Activated B cell treated with CpG ODN at 0.5 μM for 24 hours (primary cell): ENCODE measurements at regions of chr10 and their contacts with region 1.

Region 1: DNA sequence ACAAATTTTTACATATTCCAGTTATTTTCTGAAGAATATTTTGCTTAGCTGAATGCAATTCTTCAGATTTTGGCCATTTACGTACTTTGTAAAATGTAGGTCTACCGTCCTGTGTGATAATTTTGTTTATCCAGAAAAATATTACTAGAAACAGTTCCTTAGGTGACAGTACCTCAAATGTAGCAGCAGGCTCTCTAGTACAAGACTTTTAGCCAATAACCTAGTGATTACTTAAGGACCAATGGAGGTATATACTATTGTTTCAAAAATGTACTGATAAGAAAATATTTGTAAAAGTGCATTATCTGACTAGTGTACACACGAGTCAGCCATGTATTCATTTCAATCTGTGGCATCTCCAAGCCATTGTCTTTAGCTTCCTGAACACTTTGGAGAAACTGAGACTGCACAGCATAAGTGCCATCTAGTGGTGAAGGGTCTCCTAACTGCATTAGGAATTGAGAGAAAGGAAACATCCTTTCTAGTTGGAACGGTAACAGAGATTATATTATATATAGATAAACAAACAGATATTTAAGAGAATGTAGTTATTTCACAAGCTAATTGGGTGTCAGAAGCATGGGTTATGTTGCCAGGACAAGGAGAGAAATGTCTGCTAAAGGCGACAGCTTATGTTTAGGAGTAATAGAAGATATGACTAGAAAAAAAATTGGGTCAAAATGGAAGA is 23.7 kb downstream of the RTKN2 start:
- DNase-seq: no peak
- ATAC-seq: peak; percentile 64
- H3K4me3 Mint-ChIP-seq: peak overlapping the region; percentile 57
- H3K27ac Mint-ChIP-seq: peak overlapping the region; percentile 72
- H3K4me1 Mint-ChIP-seq: peaks cover 45% of the 10 kb centered on the region
- H3K27me3 Mint-ChIP-seq: no peaks in the 10 kb centered on the region
- CTCF ChIP-seq: peak; percentile 74

Region 2: GRCh38 chr10:61140765-61141392 is 1104.0 kb before region 1 on chr10:
- CTCF ChIA-PET with region 1: no interaction called
- POLR2A ChIA-PET with region 1: no interaction called
- intact Hi-C with region 1: loop called (anchors 1 kb)
- DNase-seq: no peak
- ATAC-seq: peak; percentile 58
- H3K4me3 Mint-ChIP-seq: no peak overlapping the region
- H3K27ac Mint-ChIP-seq: no peak overlapping the region
- H3K4me1 Mint-ChIP-seq: peaks cover 21% of the 10 kb centered on the region
- H3K27me3 Mint-ChIP-seq: peaks cover 4% of the 10 kb centered on the region
- CTCF ChIP-seq: no peak

Region 3: DNA sequence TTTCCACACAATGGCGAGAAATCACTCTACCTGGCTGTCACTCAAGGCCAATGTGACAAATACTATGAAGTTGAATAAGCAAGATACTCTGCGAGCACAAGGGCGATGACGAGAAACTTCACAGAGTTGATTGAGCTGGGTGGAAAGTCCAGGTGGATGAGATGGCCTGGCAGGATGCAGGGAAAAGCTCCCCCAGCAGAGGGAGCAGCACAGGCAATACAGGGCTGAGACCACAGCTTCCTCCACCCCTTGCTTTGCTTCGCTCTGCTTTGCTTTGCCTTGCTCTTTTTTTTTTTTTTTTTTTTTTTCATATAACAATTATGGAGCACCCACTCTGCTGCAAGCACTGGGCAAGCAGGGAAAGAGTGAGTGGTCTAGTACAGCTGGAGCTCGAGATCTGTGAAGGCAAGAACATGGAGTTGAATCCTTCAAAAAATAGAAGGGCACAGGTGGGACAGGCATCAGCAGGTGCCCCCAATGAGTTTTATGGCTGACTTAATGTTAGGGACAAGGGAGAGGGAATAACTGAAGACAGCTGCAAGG is 493.9 kb before region 1 on chr10:
- CTCF ChIA-PET with region 1: interaction called, 31 read pairs
- POLR2A ChIA-PET with region 1: interaction called, 14 read pairs
- intact Hi-C with region 1: loop called (anchors 1 kb)
- DNase-seq: peak; percentile 47
- ATAC-seq: peak; percentile 97
- H3K4me3 Mint-ChIP-seq: peak overlapping the region; percentile 44
- H3K27ac Mint-ChIP-seq: no peak overlapping the region
- H3K4me1 Mint-ChIP-seq: peaks cover 38% of the 10 kb centered on the region
- H3K27me3 Mint-ChIP-seq: no peaks in the 10 kb centered on the region
- CTCF ChIP-seq: no peak

Region 4: GRCh38 chr10:61987951-61988379 is 257.0 kb before region 1 on chr10:
- CTCF ChIA-PET with region 1: interaction called, 13 read pairs
- POLR2A ChIA-PET with region 1: interaction called, 15 read pairs
- intact Hi-C with region 1: loop called (anchors 2 kb)
- DNase-seq: no peak
- ATAC-seq: peak; percentile 90
- H3K4me3 Mint-ChIP-seq: peak overlapping the region; percentile 79
- H3K27ac Mint-ChIP-seq: peak overlapping the region; percentile 97
- H3K4me1 Mint-ChIP-seq: peaks cover 92% of the 10 kb centered on the region
- H3K27me3 Mint-ChIP-seq: no peaks in the 10 kb centered on the region
- CTCF ChIP-seq: no peak

Region 5: GRCh38 chr10:62082729-62083411 is 162.1 kb before region 1 on chr10:
- CTCF ChIA-PET with region 1: interaction called, 13 read pairs
- POLR2A ChIA-PET with region 1: interaction called, 14 read pairs
- intact Hi-C with region 1: loop called (anchors 1 kb)
- DNase-seq: no peak
- ATAC-seq: peak; percentile 48
- H3K4me3 Mint-ChIP-seq: peak overlapping the region; percentile 65
- H3K27ac Mint-ChIP-seq: peak overlapping the region; percentile 96
- H3K4me1 Mint-ChIP-seq: peaks cover 86% of the 10 kb centered on the region
- H3K27me3 Mint-ChIP-seq: no peaks in the 10 kb centered on the region
- CTCF ChIP-seq: no peak

Region 6: GRCh38 chr10:62149621-62150020 is 95.3 kb before region 1 on chr10:
- CTCF ChIA-PET with region 1: no interaction called
- POLR2A ChIA-PET with region 1: no interaction called
- intact Hi-C with region 1: no loop called
- DNase-seq: no peak
- ATAC-seq: no peak
- H3K4me3 Mint-ChIP-seq: no peak overlapping the region
- H3K27ac Mint-ChIP-seq: no peak overlapping the region
- H3K4me1 Mint-ChIP-seq: peaks cover 3% of the 10 kb centered on the region
- H3K27me3 Mint-ChIP-seq: no peaks in the 10 kb centered on the region
- CTCF ChIP-seq: no peak

Region 7: DNA sequence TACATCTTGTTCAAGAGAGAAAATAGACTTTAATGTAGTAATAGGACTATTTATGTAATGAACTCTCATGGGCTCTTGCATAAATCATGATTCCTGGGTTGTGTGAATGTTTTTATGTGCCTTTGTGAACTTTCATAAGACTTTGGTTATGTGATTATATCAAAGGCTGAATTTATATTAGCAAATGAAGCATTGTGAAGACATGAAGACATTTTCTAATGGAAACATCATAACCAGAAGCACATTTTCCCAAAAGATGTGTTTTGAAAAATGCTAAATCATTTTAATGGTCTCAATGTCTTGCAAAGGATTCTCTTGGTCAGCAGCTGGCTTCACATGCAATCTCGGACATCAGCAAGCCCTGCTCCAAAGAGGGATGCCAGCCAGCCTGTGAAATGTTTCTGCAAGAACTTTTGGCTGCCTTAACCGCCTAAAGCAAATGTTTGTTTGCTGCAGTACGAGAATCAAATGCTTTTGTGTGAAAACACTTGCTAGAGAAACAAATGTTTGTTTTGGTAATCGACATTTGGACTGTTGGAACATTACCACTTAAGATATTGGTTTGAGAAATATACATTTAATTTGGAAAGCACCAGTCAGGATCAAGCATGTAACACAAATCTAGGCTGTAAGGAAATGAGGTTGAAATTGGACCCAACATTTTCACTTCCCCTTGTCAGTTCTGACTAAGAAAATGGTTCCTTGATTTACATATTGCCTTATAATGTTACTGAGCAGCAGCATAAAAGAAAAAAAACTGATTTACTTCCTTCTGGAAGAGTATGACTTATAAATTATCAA is 78.4 kb before region 1 on chr10:
- CTCF ChIA-PET with region 1: no interaction called
- POLR2A ChIA-PET with region 1: no interaction called
- intact Hi-C with region 1: loop called (anchors 2 kb)
- DNase-seq: no peak
- ATAC-seq: peak; percentile 96
- H3K4me3 Mint-ChIP-seq: peak overlapping the region; percentile 16
- H3K27ac Mint-ChIP-seq: peak overlapping the region; percentile 80
- H3K4me1 Mint-ChIP-seq: peaks cover 38% of the 10 kb centered on the region
- H3K27me3 Mint-ChIP-seq: no peaks in the 10 kb centered on the region
- CTCF ChIP-seq: no peak

Region 8: DNA sequence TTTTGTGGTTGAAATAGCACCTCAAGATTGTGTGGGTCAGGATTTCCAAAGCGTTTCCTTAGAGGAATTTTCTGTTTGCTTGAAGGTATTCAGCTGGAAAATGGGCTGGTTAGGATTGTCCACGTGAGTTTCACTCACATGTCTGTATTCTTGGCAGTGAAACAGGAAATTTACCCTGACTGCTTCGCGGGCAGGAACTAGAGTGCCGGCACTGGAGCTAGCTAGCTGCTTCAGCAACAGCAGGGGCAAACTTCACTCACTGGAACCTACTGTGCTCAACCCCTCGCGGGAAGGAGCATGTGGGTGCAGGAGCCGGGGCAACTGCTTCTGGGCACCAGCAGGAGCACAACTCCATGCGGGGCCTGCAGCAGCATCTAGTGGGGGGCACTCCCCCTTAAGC is 61.7 kb after region 1 on chr10:
- CTCF ChIA-PET with region 1: no interaction called
- POLR2A ChIA-PET with region 1: no interaction called
- intact Hi-C with region 1: no loop called
- DNase-seq: no peak
- ATAC-seq: peak; percentile 18
- H3K4me3 Mint-ChIP-seq: no peak overlapping the region
- H3K27ac Mint-ChIP-seq: no peak overlapping the region
- H3K4me1 Mint-ChIP-seq: peaks cover 22% of the 10 kb centered on the region
- H3K27me3 Mint-ChIP-seq: peaks cover 4% of the 10 kb centered on the region
- CTCF ChIP-seq: no peak